ENCODE measurements at regions of chr22 and their contacts with region 1.

Region 1: DNA sequence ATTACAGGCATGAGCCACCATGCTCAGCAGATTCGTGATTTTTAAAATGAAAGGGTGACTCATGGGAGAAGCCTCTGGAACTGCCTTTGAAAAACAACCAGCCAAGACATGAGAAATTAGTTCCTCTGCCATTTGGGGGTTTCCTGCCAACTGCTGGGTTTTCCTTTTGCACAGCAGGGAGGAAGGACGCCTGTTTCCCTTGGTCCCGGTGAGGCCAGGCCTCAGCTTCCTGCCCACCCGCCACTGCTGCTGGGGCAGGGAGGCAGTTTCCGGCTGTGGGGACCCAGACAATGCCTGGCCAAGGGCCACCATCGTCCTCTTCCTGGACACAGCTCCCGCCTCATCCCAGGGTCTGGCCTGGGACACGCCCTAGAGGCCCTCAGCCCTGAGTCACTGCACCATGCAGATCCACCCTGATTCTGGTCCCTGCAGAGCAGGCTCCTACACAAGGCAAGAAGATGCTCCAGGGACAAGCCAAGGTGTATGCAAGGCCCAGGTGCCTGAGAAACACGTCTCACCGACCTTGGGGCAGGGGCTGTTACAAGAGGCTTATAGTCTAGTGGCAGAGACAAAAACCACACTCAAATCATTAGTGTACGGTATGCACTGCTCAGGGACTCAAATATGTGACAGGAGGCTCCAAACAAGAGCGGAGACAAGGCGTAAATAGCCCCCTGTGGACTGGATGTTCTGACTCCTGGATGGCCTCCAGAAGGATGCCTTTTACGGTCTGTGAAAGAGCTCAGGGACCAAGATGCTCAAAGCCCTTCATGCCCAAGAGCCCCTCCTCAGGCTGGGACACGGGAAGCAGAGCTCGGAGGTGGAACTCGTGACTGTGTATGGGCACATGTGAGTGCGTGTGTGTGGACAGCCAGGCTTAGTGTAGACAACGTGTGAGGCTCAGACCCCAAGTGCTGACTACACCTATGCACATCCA is 10.0 kb downstream of the PPM1F start:
- DNase-seq: no peak
- CTCF ChIP-seq: no peak

Region 2: DNA sequence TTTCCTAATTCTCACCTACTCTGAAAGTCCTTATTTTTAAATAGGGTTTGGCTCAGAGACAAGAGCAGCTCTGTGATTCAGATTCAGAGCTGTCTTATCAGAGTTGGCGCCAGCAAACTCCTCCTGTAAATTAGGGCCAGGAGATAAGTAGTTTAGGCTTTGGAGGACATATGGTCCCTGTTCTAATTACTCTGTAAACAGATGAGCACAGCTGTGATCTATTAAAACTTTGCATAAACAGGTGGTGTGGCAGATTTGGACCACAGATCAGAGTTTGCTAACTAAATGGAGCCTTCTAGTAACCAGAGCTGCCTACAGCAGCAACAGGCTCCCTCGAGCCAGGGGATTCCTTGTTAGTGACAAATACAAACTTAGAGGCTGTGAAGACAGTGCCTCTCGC is 235.0 kb before region 1 on chr22:
- in situ Hi-C with region 1: loop called (anchors 10 kb)
- DNase-seq: no peak
- CTCF ChIP-seq: no peak

Region 3: GRCh38 chr22:21735200-21736076 is 207.2 kb before region 1 on chr22 and contains the start of gene YPEL1:
- in situ Hi-C with region 1: loop called (anchors 10 kb)
- DNase-seq: peak; percentile 98
- CTCF ChIP-seq: no peak

Measured in GM13977 (cell line).